Activated T-helper 1 cell treated with anti-CD3 and anti-CD28 coated beads, Interleukin-12 subunit alpha, Interleukin-12 subunit beta, Interleukin-2, Interleukin-4 antibody, amounts not matched to agents 30 ng/mL and 10 ng/mL and 1 ng/mL, durations not matched to agents 14 hours and 24 hours and 36 hours (primary cell): ENCODE measurements at regions of chr12 and their contacts with region 1.

Region 1: DNA sequence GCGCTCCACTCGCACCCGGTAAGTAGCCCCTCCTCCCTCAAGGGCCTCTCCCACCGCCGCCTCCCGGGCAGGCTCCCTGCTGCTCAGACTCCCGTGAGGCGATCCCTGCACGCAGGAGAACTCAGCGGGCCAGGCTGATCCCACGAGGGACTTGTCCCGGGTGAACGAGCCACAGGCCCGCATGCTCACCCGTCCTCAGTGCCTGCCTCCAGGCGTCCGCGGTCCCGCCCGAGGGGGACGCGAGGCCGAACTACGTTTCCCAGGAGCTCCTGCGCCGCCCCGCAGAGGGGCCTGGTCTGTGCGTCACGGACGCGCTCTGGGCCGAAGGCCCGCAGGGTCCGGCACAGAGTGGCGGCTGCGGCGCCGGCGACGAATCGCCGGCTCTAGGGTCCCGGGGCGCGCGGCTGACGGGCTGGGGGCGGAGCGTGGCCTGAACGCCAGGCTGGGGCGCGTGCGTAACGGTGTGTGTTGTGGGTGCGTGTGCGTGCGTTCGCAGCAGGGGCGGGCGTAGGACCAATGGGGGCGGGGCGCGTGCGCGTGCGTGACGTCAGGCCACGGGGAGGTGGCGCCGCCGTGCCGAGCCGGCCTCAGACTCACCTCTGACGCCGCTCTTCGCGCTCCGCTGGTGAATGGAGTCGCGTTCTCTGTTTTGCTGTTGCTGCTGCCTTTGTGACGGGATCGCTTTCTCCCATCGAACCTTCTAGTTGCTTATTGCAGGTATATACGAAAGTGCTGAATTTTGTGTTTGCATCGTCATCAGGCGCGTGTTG is at the starts of genes ZNF10 and ZNF891:
- DNase-seq: peak; percentile 94
- H3K4me3 Mint-ChIP-seq: peak within 1 kb of the TSS; percentile 94
- H3K27ac Mint-ChIP-seq: peak within 1 kb of the TSS; percentile 98
- H3K4me1 Mint-ChIP-seq: peaks cover 21% of the 10 kb centered on the region
- H3K27me3 Mint-ChIP-seq: no peaks in the 10 kb centered on the region
- total RNA-seq, gene ZNF10: 5.1 and 6.4 TPM in 2 replicates
- total RNA-seq, gene ZNF891: 2.3 and 2.4 TPM in 2 replicates

Region 2: DNA sequence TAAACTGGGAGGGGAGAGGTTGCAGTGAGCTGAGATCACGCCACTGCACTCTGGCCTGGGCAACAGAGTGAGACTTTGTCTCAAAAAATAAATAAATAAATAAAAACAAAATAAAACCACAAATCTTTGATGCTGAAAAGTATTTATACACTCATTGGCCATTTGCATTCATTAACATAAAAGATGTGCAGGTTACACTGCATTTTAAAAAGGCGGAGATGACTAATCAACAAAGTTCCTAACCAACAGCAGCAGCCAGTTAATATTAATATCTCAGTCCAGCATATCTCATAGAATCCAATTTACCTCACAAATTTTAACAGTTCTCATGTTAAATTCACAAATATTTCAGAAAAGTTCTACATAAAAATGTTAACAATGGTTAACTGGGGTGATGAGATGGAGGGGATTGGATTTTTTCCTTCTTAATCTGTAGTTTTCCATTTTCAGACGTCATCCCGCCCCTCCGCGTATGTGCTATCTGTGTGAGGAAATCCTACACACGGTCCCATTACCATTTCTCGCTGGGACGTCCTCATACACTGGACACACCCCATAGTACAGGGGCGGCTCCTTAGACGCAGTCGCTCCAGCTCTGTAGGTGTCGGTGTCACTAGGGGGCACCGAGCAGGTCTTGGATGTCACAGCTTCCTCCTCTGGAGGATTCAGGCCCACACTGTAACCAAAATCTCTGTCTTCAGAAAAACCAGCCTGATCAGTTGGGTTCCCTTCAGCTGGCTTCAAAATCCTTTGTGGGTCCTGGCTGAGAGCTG is 375.9 kb before region 1 on chr12:
- intact Hi-C with region 1: no loop called
- DNase-seq: no peak
- H3K4me3 Mint-ChIP-seq: no peak overlapping the region
- H3K27ac Mint-ChIP-seq: no peak overlapping the region
- H3K4me1 Mint-ChIP-seq: peaks cover 5% of the 10 kb centered on the region
- H3K27me3 Mint-ChIP-seq: no peaks in the 10 kb centered on the region

Region 3: DNA sequence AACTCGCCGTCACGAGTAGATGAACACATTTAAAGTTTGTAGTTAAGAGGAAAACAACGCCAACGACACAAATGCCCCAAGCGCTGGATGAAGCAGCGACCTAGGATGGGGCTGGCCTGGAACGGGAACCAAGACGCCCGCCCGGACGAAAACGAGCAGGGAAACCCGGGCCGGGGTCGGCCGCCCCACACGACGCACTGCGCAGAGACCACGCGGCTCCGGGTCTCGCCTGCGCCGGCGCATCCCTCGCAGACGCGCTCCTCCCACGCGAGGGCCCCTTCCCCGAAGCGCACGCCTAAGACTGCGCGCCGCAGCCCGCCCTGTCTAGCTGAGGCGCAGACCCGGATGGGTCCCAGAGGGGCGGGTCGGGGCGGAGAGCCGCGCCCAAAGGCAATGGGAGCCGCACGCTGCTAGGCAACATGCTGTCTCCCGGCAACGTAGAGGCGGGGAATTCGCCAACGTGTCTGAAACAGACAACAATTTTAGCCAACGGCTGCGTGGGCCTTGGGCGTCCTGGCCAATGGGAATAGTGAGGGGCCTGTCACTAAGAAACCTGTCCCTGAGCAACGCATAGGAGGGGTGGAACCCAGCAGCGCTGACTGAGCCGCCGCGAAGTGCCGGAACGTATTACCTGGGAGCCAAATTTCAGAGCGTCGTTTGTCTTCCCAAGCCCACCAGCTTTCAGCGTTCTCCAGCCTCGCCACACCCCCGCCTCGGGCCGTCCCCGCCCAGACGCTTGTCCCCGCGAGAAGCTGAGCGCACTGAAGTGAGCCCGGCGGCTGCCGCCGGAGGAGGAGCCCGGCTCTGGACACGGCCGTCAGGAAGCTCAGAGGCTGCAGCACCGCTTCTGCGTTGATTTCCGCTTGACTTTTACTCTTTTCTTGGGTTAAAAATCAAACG is 221.8 kb before region 1 on chr12:
- intact Hi-C with region 1: loop called (anchors 1 kb)
- DNase-seq: peak; percentile 92
- H3K4me3 Mint-ChIP-seq: peak overlapping the region; percentile 88
- H3K27ac Mint-ChIP-seq: peak overlapping the region; percentile 91
- H3K4me1 Mint-ChIP-seq: no peaks in the 10 kb centered on the region
- H3K27me3 Mint-ChIP-seq: peaks cover 11% of the 10 kb centered on the region

Region 4: GRCh38 chr12:132986001-132986912 is 144.0 kb before region 1 on chr12 and contains the start of gene ZNF26:
- intact Hi-C with region 1: loop called (anchors 1 kb)
- DNase-seq: peak; percentile 84
- H3K4me3 Mint-ChIP-seq: peak within 1 kb of the TSS; percentile 90
- H3K27ac Mint-ChIP-seq: peak within 1 kb of the TSS; percentile 92
- H3K4me1 Mint-ChIP-seq: peaks cover 22% of the 10 kb centered on the region
- H3K27me3 Mint-ChIP-seq: no peaks in the 10 kb centered on the region
- total RNA-seq, gene ZNF26: 18.2 and 22.1 TPM in 2 replicates

Region 5: DNA sequence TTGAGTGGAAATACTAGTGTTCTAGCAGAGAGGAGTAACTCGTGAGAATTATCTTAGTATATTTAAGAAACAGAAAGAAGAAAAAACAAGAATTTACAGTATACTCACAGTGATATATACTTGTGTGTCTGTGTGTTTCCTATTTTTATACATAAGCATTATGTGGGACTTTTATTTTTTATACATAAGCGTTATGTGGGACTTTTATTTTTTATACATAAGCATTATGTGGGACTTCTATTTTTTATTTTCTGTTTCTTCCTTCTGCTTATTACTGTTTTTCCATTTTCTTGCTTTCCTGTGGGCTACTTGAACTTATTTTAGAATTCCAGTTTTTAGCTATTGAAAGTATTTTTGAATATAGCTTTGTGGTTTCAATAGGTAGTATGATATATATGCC is 56.4 kb before region 1 on chr12:
- intact Hi-C with region 1: no loop called
- DNase-seq: no peak
- H3K4me3 Mint-ChIP-seq: no peak overlapping the region
- H3K27ac Mint-ChIP-seq: no peak overlapping the region
- H3K4me1 Mint-ChIP-seq: no peaks in the 10 kb centered on the region
- H3K27me3 Mint-ChIP-seq: no peaks in the 10 kb centered on the region

Region 6: GRCh38 chr12:133181238-133181959 is 51.2 kb after region 1 on chr12 and contains the start of gene ZNF268:
- intact Hi-C with region 1: loop called (anchors 1 kb)
- DNase-seq: peak; percentile 87
- H3K4me3 Mint-ChIP-seq: peak within 1 kb of the TSS; percentile 97
- H3K27ac Mint-ChIP-seq: peak within 1 kb of the TSS; percentile 95
- H3K4me1 Mint-ChIP-seq: peaks cover 20% of the 10 kb centered on the region
- H3K27me3 Mint-ChIP-seq: no peaks in the 10 kb centered on the region
- total RNA-seq, gene ZNF268: 16.7 and 21.5 TPM in 2 replicates